ENCODE measurements at regions of chr6 and their contacts with region 1.

Region 1: DNA sequence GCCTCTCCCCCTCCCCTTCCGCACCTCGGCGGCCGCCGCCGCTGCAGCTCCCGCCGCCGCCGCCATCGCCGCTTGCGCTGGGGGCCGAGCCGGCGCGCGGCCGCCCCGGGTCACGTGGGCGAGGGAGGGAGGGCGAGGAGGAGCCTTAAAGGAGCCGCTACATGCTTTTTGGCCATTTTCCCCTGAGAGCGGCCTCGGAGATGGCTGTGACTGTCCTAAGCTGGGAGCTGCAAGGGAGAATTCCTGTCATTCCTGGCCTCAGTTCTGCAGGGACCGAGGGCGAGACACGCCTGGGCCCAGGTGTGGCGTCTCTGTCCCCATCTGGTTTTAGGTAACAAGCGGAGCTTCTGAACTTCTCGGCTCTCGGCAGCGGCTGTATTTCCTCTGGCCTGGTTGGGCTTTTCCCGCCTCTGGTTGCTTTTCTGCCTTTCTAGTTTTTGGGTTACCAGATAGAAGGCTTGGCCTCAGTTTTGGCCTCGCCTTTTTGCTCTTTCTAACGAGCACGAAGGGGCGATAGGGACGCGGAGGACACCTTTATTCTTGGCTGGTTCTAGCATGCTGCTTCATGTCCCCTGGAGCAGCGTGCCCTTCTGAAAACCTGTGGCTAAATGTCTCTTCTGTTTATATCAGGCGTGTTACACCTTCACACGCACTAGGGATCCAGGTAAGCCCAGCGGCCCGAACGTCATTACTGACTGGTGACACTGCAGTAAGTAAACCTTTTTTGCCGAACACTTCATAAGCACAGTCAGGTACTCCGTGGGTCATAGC is at the start of gene EHMT2:
- DNase-seq: peak; percentile 66 to 76 (median 71)
- H3K4me3 ChIP-seq: peak within 1 kb of the TSS; percentile 73 to 97 (median 73)
- H3K4me3 Mint-ChIP-seq: peak within 1 kb of the TSS; percentile 94 to 97
- H3K27ac ChIP-seq: peak within 1 kb of the TSS; percentile 45 to 71
- H3K27ac Mint-ChIP-seq: peak within 1 kb of the TSS; percentile 85 to 95 (median 91)
- H3K4me1 ChIP-seq: peaks cover 40 to 57% of the 10 kb centered on the region in 2 donors
- H3K4me1 Mint-ChIP-seq: peaks cover 41% of the 10 kb centered on the region
- H3K27me3 ChIP-seq: no peaks in the 10 kb centered on the region
- H3K27me3 Mint-ChIP-seq: peaks cover 2 to 4% (median 3%) of the 10 kb centered on the region in 3 donors
- CTCF ChIP-seq: no peak
- polyA plus RNA-seq, gene EHMT2: 9.9 to 52.8 (median 16.0) TPM

Region 2: DNA sequence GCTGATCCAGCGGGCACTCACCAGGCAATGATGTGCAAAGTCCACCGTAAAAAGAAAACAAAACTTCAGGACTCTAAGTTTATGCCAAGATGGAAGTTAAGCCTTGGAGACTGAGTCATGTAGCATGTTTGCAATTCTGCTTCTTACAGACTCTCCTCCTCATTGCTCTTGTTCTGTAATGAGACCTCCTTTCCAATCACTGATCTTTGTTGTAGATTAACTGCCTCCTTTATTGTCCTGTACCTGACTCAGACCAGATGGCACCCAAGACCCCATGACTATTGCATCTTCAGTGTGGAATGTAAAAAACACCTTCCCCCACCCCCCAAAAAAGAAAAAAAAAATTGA is 46.3 kb before region 1 on chr6:
- intact Hi-C with region 1: no loop called
- DNase-seq: no peak
- H3K4me3 ChIP-seq: no peak overlapping the region
- H3K4me3 Mint-ChIP-seq: no peak overlapping the region
- H3K27ac ChIP-seq: no peak overlapping the region
- H3K27ac Mint-ChIP-seq: peak overlapping the region in 1 of 7 donors; percentile 26
- H3K4me1 ChIP-seq: no peaks in the 10 kb centered on the region
- H3K4me1 Mint-ChIP-seq: no peaks in the 10 kb centered on the region
- H3K27me3 ChIP-seq: no peaks in the 10 kb centered on the region
- H3K27me3 Mint-ChIP-seq: peaks cover 0 to 3% (median 2%) of the 10 kb centered on the region in 3 donors
- CTCF ChIP-seq: no peak

Region 3: GRCh38 chr6:31862344-31863227 is 35.2 kb before region 1 on chr6 and contains the start of gene NEU1:
- intact Hi-C with region 1: loop called in 1 of 2 experiments (anchors 5 kb)
- DNase-seq: peak; percentile 100
- H3K4me3 ChIP-seq: peak within 1 kb of the TSS; percentile 69 to 97 (median 85)
- H3K4me3 Mint-ChIP-seq: peak within 1 kb of the TSS; percentile 94 to 98
- H3K27ac ChIP-seq: peak within 1 kb of the TSS; percentile 72 to 89
- H3K27ac Mint-ChIP-seq: peak within 1 kb of the TSS; percentile 93 to 98 (median 96)
- H3K4me1 ChIP-seq: peaks cover 22 to 28% of the 10 kb centered on the region in 2 donors
- H3K4me1 Mint-ChIP-seq: peaks cover 23% of the 10 kb centered on the region
- H3K27me3 ChIP-seq: no peaks in the 10 kb centered on the region
- H3K27me3 Mint-ChIP-seq: peaks cover 0 to 2% (median 2%) of the 10 kb centered on the region in 3 donors
- CTCF ChIP-seq: no peak
- polyA plus RNA-seq, gene NEU1: 70.2 to 89.5 (median 81.8) TPM

Region 4: GRCh38 chr6:31952140-31952805 is 54.5 kb after region 1 on chr6:
- intact Hi-C with region 1: loop called (anchors 5 kb)
- DNase-seq: peak; percentile 51 to 60 (median 59)
- H3K4me3 ChIP-seq: no peak overlapping the region
- H3K4me3 Mint-ChIP-seq: no peak overlapping the region
- H3K27ac ChIP-seq: peak overlapping the region in 1 of 2 donors; percentile 10
- H3K27ac Mint-ChIP-seq: peak overlapping the region in 4 of 7 donors; percentile 5 to 84 (median 35)
- H3K4me1 ChIP-seq: no peaks in the 10 kb centered on the region
- H3K4me1 Mint-ChIP-seq: peaks cover 12% of the 10 kb centered on the region
- H3K27me3 ChIP-seq: no peaks in the 10 kb centered on the region
- H3K27me3 Mint-ChIP-seq: peaks cover 1 to 16% (median 3%) of the 10 kb centered on the region in 3 donors
- CTCF ChIP-seq: peak; percentile 85

Region 5: DNA sequence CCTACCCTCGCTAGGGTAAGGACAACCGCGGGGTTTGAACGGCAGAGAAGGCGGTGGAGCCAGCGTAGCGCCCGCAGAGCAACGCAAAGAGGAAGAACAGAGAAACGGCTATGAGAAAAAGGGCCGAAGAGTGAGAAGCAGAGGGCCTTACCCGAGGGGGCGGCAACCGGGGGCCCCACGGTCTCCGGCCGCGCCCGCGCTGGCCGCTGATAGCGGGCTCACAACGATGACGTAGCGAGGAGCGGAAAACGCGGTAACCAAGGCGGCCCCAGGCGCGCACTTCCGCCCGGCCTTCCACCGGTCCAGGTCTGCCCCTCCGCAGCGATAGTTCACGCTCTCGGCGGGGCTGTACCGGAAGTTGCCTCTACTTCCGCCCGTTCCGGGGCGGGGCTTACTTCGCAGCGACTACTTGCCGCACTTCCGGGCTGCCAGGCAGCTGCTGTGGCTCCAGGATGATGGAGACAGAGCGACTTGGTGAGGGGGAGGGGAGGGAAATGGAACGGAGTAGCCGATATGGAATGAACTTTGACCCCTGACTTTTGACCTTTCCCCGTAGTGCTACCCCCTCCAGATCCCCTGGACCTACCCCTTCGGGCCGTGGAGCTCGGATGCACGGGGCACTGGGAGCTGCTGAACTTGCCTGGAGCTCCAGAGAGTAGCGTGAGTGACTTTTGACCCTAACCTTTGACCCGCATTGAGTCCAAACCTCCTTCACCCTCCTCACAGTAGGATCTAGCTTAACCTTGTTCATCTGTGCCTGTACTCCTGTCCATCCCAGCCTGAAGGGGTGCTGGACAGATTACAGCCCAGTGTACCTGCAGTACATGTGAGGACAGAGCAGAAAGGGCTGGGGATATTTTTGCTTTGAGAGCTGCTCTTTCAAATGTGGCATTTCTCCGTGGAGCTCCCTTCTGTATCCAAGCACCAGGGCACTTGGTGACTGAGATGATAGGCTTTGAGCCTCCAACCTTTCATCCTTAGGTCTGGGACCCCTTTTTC is 61.2 kb after region 1 on chr6 and contains the starts of genes NELFE and SKIC2:
- intact Hi-C with region 1: loop called (anchors 5 kb)
- DNase-seq: peak; percentile 99
- H3K4me3 ChIP-seq: peak within 1 kb of the TSS; percentile 91 to 100 (median 93)
- H3K4me3 Mint-ChIP-seq: peak within 1 kb of the TSS; percentile 91 to 97
- H3K27ac ChIP-seq: peak within 1 kb of the TSS; percentile 79 to 99
- H3K27ac Mint-ChIP-seq: peak within 1 kb of the TSS; percentile 97 to 99 (median 99)
- H3K4me1 ChIP-seq: peaks cover 17 to 22% of the 10 kb centered on the region in 2 donors
- H3K4me1 Mint-ChIP-seq: peaks cover 22% of the 10 kb centered on the region
- H3K27me3 ChIP-seq: no peaks in the 10 kb centered on the region
- H3K27me3 Mint-ChIP-seq: no peaks in the 10 kb centered on the region
- CTCF ChIP-seq: no peak
- polyA plus RNA-seq, gene NELFE: 48.8 to 74.4 (median 61.4) TPM
- polyA plus RNA-seq, gene SKIC2: 13.2 to 72.1 (median 13.2) TPM